ENCODE measurements at regions of chr1 and their contacts with region 1.

Region 1: GRCh38 chr1:218299416-218299815 is 14.3 kb downstream of the RRP15 start:
- DNase-seq: peak; percentile 70
- H3K4me3 Mint-ChIP-seq: no peak overlapping the region
- H3K27ac Mint-ChIP-seq: no peak overlapping the region
- H3K4me1 Mint-ChIP-seq: peaks cover 41% of the 10 kb centered on the region
- H3K27me3 Mint-ChIP-seq: no peaks in the 10 kb centered on the region
- CTCF ChIP-seq: peak; percentile 68

Region 2: DNA sequence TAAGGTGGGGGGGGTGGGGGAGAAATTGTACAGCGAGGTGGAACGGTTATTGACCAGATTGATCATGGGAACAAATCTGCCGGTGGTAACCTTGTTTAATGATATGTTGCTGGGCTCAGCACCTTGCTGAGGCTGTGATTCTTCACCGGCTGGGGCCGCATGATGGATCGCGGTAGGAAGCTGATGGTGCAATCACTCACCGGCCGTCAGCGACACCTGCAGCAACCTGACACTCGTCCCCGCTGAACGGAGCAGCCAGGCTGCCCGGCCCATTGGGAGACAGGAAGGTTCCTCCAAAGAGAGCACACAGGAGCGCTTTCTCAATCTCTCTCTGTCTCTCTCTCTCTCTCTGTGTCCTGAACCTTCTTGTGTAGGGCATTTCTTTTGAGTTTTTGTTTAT is 142.8 kb before region 1 on chr1:
- CTCF ChIA-PET with region 1: no interaction called
- POLR2A ChIA-PET with region 1: no interaction called
- intact Hi-C with region 1: no loop called
- DNase-seq: peak; percentile 24
- H3K4me3 Mint-ChIP-seq: no peak overlapping the region
- H3K27ac Mint-ChIP-seq: no peak overlapping the region
- H3K4me1 Mint-ChIP-seq: no peaks in the 10 kb centered on the region
- H3K27me3 Mint-ChIP-seq: peaks cover 89% of the 10 kb centered on the region
- CTCF ChIP-seq: no peak

Region 3: GRCh38 chr1:218284934-218285635 is 14.3 kb before region 1 on chr1 and contains the start of gene RRP15:
- CTCF ChIA-PET with region 1: interaction called, 49 read pairs
- POLR2A ChIA-PET with region 1: interaction called, 43 read pairs
- intact Hi-C with region 1: no loop called
- DNase-seq: peak; percentile 97
- H3K4me3 Mint-ChIP-seq: peak within 1 kb of the TSS; percentile 84
- H3K27ac Mint-ChIP-seq: peak within 1 kb of the TSS; percentile 91
- H3K4me1 Mint-ChIP-seq: peaks cover 18% of the 10 kb centered on the region
- H3K27me3 Mint-ChIP-seq: peaks cover 6% of the 10 kb centered on the region
- CTCF ChIP-seq: no peak
- total RNA-seq, gene RRP15: 65.8 and 83.1 TPM in 2 replicates

Region 4: GRCh38 chr1:218312509-218312908 is 13.1 kb after region 1 on chr1:
- CTCF ChIA-PET with region 1: interaction called, 29 read pairs
- POLR2A ChIA-PET with region 1: interaction called, 10 read pairs
- intact Hi-C with region 1: no loop called
- DNase-seq: no peak
- H3K4me3 Mint-ChIP-seq: no peak overlapping the region
- H3K27ac Mint-ChIP-seq: no peak overlapping the region
- H3K4me1 Mint-ChIP-seq: no peaks in the 10 kb centered on the region
- H3K27me3 Mint-ChIP-seq: no peaks in the 10 kb centered on the region
- CTCF ChIP-seq: no peak

Region 5: DNA sequence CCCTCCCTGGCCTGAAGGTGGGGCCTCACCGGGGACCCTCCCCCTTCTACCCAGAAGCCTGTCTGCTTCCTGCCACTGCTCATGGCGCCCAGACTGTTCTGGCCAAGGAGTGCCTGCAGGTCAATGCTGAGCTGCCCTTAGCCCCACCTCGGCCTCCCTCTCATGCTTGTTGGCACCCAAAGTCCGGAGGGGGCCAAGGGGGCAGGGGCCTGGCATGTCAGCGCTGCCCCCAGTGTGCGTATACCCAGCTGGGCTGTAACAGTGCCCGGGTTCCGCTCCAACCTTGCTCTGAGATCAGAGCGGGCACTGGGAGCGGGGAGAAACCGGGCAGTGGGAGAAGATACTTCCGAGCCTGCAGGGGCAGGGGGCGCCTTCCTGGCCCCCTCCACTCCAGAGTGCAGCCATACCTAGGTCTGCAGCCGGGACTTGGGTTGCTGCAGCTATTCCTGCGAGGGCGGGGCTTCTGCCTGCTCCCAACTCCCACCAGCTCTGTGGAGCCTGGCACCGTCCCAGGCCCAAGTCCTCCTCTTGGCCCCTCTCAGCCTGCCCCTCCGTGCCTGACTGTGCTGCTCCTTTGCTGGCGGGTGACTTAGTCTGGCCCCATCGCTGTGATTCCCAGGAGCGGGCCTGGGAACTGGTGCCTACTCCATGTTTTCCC is 24.3 kb after region 1 on chr1:
- CTCF ChIA-PET with region 1: interaction called, 60 read pairs
- POLR2A ChIA-PET with region 1: interaction called, 3 read pairs
- intact Hi-C with region 1: no loop called
- DNase-seq: no peak
- H3K4me3 Mint-ChIP-seq: no peak overlapping the region
- H3K27ac Mint-ChIP-seq: no peak overlapping the region
- H3K4me1 Mint-ChIP-seq: no peaks in the 10 kb centered on the region
- H3K27me3 Mint-ChIP-seq: no peaks in the 10 kb centered on the region
- CTCF ChIP-seq: no peak

Region 6: GRCh38 chr1:218330043-218330623 is 30.7 kb after region 1 on chr1:
- CTCF ChIA-PET with region 1: interaction called, 60 read pairs
- POLR2A ChIA-PET with region 1: interaction called, 3 read pairs
- intact Hi-C with region 1: no loop called
- DNase-seq: peak; percentile 67
- H3K4me3 Mint-ChIP-seq: no peak overlapping the region
- H3K27ac Mint-ChIP-seq: peak overlapping the region; percentile 55
- H3K4me1 Mint-ChIP-seq: no peaks in the 10 kb centered on the region
- H3K27me3 Mint-ChIP-seq: no peaks in the 10 kb centered on the region
- CTCF ChIP-seq: peak; percentile 84

Region 7: DNA sequence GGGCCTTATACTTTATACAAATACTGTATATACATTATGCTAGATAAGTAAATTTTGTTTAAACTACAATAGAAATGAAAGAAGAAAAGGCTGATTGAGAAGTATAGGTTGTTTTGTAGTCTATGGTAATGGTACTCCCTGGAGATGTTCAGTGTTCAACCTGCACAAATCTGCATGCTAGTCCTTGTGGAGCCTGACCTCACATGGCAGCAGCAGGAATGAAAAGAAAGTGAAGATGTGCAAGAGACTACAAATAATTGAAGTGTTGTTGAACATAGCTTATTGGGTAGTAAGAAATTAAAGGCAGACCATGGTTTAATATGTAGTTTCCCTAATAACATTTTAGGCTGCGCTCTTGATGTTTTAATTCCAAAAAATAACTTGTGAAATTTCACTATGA is 246.9 kb after region 1 on chr1:
- CTCF ChIA-PET with region 1: interaction called, 11 read pairs
- POLR2A ChIA-PET with region 1: no interaction called
- intact Hi-C with region 1: no loop called
- DNase-seq: peak; percentile 42
- H3K4me3 Mint-ChIP-seq: no peak overlapping the region
- H3K27ac Mint-ChIP-seq: no peak overlapping the region
- H3K4me1 Mint-ChIP-seq: no peaks in the 10 kb centered on the region
- H3K27me3 Mint-ChIP-seq: no peaks in the 10 kb centered on the region
- CTCF ChIP-seq: peak; percentile 46

Region 8: GRCh38 chr1:218930472-218931241 is 631.2 kb after region 1 on chr1:
- CTCF ChIA-PET with region 1: no interaction called
- POLR2A ChIA-PET with region 1: no interaction called
- intact Hi-C with region 1: no loop called
- DNase-seq: peak; percentile 66
- H3K4me3 Mint-ChIP-seq: no peak overlapping the region
- H3K27ac Mint-ChIP-seq: no peak overlapping the region
- H3K4me1 Mint-ChIP-seq: peaks cover 11% of the 10 kb centered on the region
- H3K27me3 Mint-ChIP-seq: no peaks in the 10 kb centered on the region
- CTCF ChIP-seq: no peak

Measured in MCF 10A (cell line).